ENCODE measurements at regions of chr21 and their contacts with region 1.

Region 1: DNA sequence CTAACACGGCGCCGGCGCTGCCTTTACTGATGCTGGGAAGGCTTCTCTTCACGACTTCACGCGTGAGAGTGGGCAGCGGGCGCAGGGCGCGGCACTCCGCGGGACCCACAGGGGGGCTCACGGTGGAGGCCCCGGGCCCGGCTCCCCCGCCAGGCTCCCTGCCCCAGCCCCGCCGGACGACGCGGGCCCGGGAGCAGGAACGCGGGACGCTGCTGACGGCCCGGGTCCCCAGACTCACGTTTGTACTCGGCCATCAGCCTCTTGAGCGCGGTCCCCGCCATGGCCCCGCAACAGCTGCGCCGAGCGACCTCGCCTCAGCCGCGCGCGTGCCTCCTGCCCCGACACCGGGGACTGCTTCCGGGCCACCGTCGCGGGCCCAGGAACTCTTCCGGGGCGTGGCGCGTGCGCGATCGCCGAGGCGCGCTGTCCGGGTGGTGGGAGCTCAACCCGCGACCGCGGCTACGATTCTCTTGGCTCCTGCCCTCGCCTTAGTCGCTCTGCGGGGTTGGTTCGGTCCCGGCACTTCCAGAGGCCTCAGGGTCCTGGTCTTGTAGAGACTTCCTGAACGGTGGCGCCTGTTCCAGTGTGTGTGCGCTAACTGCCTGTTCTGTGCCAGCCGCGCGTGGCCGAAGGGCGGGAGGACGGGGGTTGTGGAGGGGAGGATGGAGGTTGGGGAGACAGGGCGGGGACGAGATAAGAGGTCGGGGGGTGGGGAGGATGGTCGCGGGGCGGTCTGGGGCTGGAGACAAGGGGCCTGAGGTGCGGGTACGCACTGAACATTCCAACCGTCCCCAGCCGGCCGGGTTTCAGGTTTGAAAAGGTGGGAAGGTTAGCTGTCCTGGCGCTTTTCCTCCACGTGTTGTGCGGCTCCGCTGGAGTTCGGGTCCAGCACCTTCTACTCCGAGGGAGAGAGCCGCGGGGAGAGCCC is at the start of gene UBE2G2:
- DNase-seq: peak; percentile 80
- H3K4me3 ChIP-seq: peak within 1 kb of the TSS; percentile 57 to 97 (median 94)
- H3K27ac ChIP-seq: peak within 1 kb of the TSS; percentile 54
- H3K4me1 ChIP-seq: peaks cover 20% of the 10 kb centered on the region
- H3K27me3 ChIP-seq: no peaks in the 10 kb centered on the region
- CTCF ChIP-seq: no peak
- POLR2A ChIP-seq: peak; percentile 74
- total RNA-seq, gene UBE2G2: 114 and 117 TPM in 2 replicates

Region 2: GRCh38 chr21:44817506-44817880 is 15.8 kb after region 1 on chr21:
- CTCF ChIA-PET with region 1: interaction called, 5 read pairs
- POLR2A ChIA-PET with region 1: interaction called, 4 read pairs
- dilution Hi-C with region 1: no loop called
- intact Hi-C with region 1: loop called (anchors 1 kb)
- DNase-seq: peak; percentile 80
- H3K4me3 ChIP-seq: peak overlapping the region; percentile 67 to 81 (median 71)
- H3K27ac ChIP-seq: peak overlapping the region; percentile 59
- H3K4me1 ChIP-seq: peaks cover 4% of the 10 kb centered on the region
- H3K27me3 ChIP-seq: no peaks in the 10 kb centered on the region
- CTCF ChIP-seq: peak in 1 of 2 donors; percentile 2
- POLR2A ChIP-seq: no peak

Region 3: DNA sequence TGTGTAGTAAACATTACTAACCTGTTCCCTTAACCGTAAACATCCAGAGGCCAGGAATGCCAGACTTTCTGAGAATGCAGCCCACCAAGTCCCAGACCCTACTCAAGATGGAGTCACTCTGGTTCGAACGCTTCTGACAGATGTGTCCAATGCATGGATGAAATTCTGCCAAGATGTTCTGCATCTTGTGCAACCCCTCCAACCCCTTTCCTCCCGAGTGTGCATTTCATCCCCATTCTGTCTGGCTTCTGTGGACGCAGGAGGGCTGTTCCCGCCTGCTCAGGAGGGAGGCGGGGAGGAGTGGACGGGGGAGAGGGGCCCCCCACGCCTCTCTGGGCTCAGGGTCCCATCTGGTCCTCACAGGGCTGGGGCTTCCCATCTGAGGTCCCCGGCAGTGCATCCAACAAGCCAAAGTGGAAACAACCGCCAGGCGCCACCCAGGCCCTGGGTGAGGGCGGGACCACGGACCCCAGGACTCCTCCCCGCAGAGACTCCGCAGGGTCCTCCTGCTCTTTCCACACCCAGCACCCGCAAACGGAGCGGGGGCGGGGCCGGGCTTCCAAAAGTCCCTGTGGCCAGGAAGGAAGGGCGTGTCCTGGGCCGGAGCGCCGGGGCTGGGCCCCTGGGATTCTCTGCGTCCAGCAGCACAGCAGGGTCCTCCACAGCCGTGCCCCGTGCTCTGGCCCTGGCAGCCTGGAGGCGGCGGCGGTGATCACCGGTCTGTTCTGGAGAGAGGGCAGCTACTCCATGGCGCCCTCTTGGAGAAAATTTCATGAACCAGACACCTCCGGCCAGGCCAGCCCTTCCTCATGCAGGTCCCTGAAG is 43.9 kb after region 1 on chr21:
- CTCF ChIA-PET with region 1: interaction called, 6 read pairs
- POLR2A ChIA-PET with region 1: no interaction called
- dilution Hi-C with region 1: no loop called
- intact Hi-C with region 1: loop called (anchors 1 kb)
- DNase-seq: peak; percentile 68
- H3K4me3 ChIP-seq: peak overlapping the region; percentile 7 to 28 (median 11)
- H3K27ac ChIP-seq: no peak overlapping the region
- H3K4me1 ChIP-seq: peaks cover 16% of the 10 kb centered on the region
- H3K27me3 ChIP-seq: peaks cover 2 to 4% of the 10 kb centered on the region in 2 experiments
- CTCF ChIP-seq: peak; percentile 22 to 53
- POLR2A ChIP-seq: no peak

Region 4: GRCh38 chr21:44885594-44885993 is 83.9 kb after region 1 on chr21:
- CTCF ChIA-PET with region 1: no interaction called
- POLR2A ChIA-PET with region 1: no interaction called
- dilution Hi-C with region 1: no loop called
- intact Hi-C with region 1: no loop called
- DNase-seq: no peak
- H3K4me3 ChIP-seq: no peak overlapping the region
- H3K27ac ChIP-seq: no peak overlapping the region
- H3K4me1 ChIP-seq: peaks cover 20% of the 10 kb centered on the region
- H3K27me3 ChIP-seq: no peaks in the 10 kb centered on the region
- CTCF ChIP-seq: no peak
- POLR2A ChIP-seq: no peak

Measured in endothelial cell of umbilical vein (primary cell).